ENCODE measurements at regions of chr18 and their contacts with region 1.

Region 1: GRCh38 chr18:58043491-58044379 is at the start of gene NEDD4L:
- DNase-seq: peak; percentile 56 to 57
- ATAC-seq: peak; percentile 84 to 87
- H3K4me3 ChIP-seq: peak within 1 kb of the TSS; percentile 61 to 76 (median 67)
- H3K27ac ChIP-seq: peak within 1 kb of the TSS in 3 of 4 donors; percentile 55 to 65 (median 55)
- H3K4me1 ChIP-seq: peaks cover 0 to 16% of the 10 kb centered on the region in 2 donors
- H3K27me3 ChIP-seq: peaks cover 0 to 4% (median 0%) of the 10 kb centered on the region in 3 donors
- CTCF ChIP-seq: peak; percentile 44 to 92 (median 70)
- POLR2A ChIP-seq: peak; percentile 8 to 30
- total RNA-seq, gene NEDD4L: 27.4 to 81.5 (median 51.5) TPM

Region 2: DNA sequence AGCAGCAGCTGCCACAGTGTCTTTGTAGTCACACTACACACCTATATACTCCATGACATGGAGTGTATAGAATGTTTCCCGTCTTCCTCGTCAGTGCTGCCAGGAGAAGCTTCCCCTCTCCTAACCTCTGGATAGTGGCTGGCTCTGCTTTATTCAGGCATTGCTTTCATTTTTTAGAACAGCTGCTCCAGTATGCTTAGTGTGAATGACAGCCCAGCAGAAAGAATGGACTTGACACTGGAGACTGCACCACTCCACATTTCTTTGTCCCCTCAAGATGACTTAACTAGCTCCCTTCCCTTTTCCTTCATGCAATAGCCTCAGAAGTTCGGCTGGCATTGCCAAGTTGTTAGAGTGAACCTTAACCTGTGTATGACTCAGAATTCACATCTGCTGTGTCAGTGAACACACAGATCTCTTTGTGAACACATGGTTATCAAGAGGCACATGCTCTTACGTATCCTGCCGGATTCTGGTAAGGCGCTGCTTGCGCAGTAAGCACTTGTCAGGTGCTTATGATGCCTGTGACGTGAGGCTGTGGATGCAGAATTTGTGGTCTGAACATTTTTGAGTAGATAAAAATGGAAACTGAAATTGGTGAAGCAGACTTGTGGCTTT is 74.2 kb after region 1 on chr18:
- in situ Hi-C with region 1: loop called in 2 of 4 experiments (anchors 5 to 10 kb)
- intact Hi-C with region 1: loop called (anchors 1 kb)
- DNase-seq: no peak
- ATAC-seq: no peak
- H3K4me3 ChIP-seq: no peak overlapping the region
- H3K27ac ChIP-seq: no peak overlapping the region
- H3K4me1 ChIP-seq: no peaks in the 10 kb centered on the region
- H3K27me3 ChIP-seq: no peaks in the 10 kb centered on the region
- CTCF ChIP-seq: no peak
- POLR2A ChIP-seq: no peak

Region 3: GRCh38 chr18:58128381-58129374 is 84.9 kb after region 1 on chr18:
- in situ Hi-C with region 1: loop called in 1 of 4 experiments (anchors 10 kb)
- intact Hi-C with region 1: no loop called
- DNase-seq: no peak
- ATAC-seq: no peak
- H3K4me3 ChIP-seq: no peak overlapping the region
- H3K27ac ChIP-seq: no peak overlapping the region
- H3K4me1 ChIP-seq: no peaks in the 10 kb centered on the region
- H3K27me3 ChIP-seq: no peaks in the 10 kb centered on the region
- CTCF ChIP-seq: no peak
- POLR2A ChIP-seq: no peak

Region 4: GRCh38 chr18:58321986-58322385 is 278.3 kb after region 1 on chr18:
- in situ Hi-C with region 1: loop called in 1 of 4 experiments (anchors 25 kb)
- intact Hi-C with region 1: loop called (anchors 5 kb)
- DNase-seq: peak; percentile 80 to 85
- ATAC-seq: peak; percentile 91 to 98
- H3K4me3 ChIP-seq: peak overlapping the region in 1 of 4 donors; percentile 11
- H3K27ac ChIP-seq: peak overlapping the region; percentile 62 to 85 (median 82)
- H3K4me1 ChIP-seq: peaks cover 26 to 39% of the 10 kb centered on the region in 2 donors
- H3K27me3 ChIP-seq: no peaks in the 10 kb centered on the region
- CTCF ChIP-seq: peak in 4 of 5 experiments; percentile 57 to 74 (median 70)
- POLR2A ChIP-seq: peak; percentile 49 to 51

Region 5: DNA sequence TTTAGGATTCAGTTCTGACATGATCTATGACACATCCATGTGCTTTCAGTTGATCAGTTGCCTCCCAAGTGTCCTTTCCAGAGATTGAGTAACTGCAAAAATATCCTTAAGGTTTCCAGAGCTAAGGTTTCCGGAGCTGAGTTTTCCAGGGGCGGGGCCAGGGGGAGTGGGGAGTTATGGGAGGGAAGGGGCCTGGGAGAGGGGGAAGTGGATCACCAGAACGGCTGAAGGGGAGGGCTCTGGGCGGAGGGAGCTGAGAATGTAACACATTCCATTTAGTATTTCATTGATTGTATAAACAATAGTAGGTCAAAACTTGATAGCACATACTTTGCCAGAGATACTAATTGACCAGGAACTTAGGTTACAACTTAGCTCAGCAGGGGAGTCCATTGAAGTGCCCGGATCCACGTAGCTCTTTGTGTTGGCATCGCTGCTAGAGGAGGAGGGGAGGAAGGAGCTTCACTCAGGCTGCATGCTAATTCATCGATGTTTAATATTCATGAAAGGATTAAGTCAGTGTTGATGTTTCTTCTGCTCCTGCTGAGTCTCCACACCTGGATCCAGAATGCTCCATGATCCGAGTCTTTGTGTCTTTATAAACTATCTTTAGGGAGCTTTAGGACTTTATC is 295.3 kb after region 1 on chr18:
- in situ Hi-C with region 1: loop called in 1 of 4 experiments (anchors 25 kb)
- intact Hi-C with region 1: no loop called
- DNase-seq: no peak
- ATAC-seq: no peak
- H3K4me3 ChIP-seq: no peak overlapping the region
- H3K27ac ChIP-seq: peak overlapping the region in 2 of 4 donors; percentile 57 to 70
- H3K4me1 ChIP-seq: peaks cover 35 to 41% of the 10 kb centered on the region in 2 donors
- H3K27me3 ChIP-seq: no peaks in the 10 kb centered on the region
- CTCF ChIP-seq: no peak
- POLR2A ChIP-seq: no peak

Region 6: GRCh38 chr18:58493516-58494253 is 449.9 kb after region 1 on chr18:
- in situ Hi-C with region 1: no loop called
- intact Hi-C with region 1: loop called (anchors 10 kb)
- DNase-seq: peak; percentile 64 to 76
- ATAC-seq: peak; percentile 90 to 91
- H3K4me3 ChIP-seq: peak overlapping the region in 2 of 4 donors; percentile 21 to 23
- H3K27ac ChIP-seq: peak overlapping the region; percentile 56 to 80 (median 72)
- H3K4me1 ChIP-seq: peaks cover 19 to 30% of the 10 kb centered on the region in 2 donors
- H3K27me3 ChIP-seq: no peaks in the 10 kb centered on the region
- CTCF ChIP-seq: peak; percentile 78 to 86 (median 83)
- POLR2A ChIP-seq: no peak

Region 7: DNA sequence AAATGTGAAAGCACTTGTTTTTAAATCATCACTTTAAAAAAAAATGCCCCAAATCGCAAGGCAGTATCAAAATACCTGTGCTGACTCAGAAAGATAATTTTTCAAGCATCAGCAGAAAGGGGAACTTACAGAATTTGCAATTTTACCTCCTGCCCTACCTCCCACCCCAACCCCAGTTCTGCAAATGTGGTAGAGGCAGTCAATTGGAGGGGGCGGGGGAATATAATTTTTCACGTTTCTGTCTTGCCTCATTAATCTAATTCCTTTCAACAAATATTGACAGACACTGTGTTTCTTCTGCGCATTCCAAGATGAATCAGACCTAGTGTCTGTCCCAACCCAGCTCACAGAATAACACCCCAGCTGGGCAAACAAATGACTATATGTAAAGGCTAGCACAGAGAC is 508.3 kb after region 1 on chr18:
- in situ Hi-C with region 1: no loop called
- intact Hi-C with region 1: no loop called
- DNase-seq: no peak
- ATAC-seq: no peak
- H3K4me3 ChIP-seq: no peak overlapping the region
- H3K27ac ChIP-seq: peak overlapping the region in 2 of 4 donors; percentile 81 to 93
- H3K4me1 ChIP-seq: peaks cover 25 to 33% of the 10 kb centered on the region in 2 donors
- H3K27me3 ChIP-seq: no peaks in the 10 kb centered on the region
- CTCF ChIP-seq: no peak
- POLR2A ChIP-seq: no peak

Measured in gastrocnemius medialis (tissue), 4 donors.